Right cardiac atrium (tissue), 5 donors: ENCODE measurements at regions of chr20 and their contacts with region 1.

Region 1: GRCh38 chr20:38805502-38805957 is at the start of gene PPP1R16B:
- DNase-seq: peak; percentile 55 to 87 (median 86)
- ATAC-seq: peak; percentile 89 to 93
- H3K4me3 ChIP-seq: peak within 1 kb of the TSS; percentile 77
- H3K27ac ChIP-seq: peak within 1 kb of the TSS; percentile 76
- H3K4me1 ChIP-seq: peaks cover 3% of the 10 kb centered on the region
- H3K27me3 ChIP-seq: no peaks in the 10 kb centered on the region
- total RNA-seq, gene PPP1R16B: 5.1 to 9.1 (median 7.0) TPM

Region 2: DNA sequence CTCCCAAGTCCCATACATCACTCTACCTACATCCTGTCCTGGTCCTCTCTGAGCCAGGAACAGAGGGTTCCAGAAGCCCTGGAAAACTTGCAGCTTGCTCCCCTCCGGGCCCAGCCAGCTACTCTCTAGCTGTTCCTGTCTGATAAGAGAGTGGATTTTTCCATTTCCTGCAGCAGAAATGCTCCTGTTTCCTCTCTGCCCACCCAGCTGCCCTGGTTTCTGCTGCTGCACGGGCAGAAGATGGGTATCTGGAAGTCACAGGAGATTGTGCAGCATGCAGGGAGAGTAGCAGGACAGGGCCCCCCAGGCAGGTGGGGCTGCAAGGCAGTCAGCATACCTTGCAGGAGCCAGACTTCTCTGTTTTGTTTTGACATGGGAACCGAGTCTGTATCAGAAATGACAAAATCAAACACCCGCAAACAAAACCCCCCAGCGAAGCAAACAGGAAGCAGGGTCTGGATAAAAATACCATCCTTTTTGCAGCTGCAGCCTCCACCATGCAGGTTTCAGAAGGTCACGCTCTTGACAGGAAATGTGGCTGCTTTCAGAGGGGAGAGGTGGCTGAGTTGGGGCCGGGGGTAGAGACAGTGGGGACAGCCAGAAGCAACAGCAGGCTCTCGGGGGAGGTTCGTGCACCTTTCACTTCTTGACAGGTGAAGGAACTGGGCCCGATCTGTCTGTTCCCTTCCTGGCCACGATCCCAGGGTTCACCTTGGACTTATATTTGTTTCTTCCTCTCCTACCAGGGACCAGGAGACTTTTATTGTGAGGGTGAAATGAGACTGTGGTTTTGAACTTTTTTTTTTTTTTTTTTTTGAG is 69.9 kb after region 1 on chr20:
- intact Hi-C with region 1: loop called in 2 of 4 experiments (anchors 10 kb)
- DNase-seq: peak in 2 of 3 donors; percentile 49 to 65
- ATAC-seq: peak; percentile 76 to 94
- H3K4me3 ChIP-seq: no peak overlapping the region
- H3K27ac ChIP-seq: peak overlapping the region; percentile 69
- H3K4me1 ChIP-seq: peaks cover 8% of the 10 kb centered on the region
- H3K27me3 ChIP-seq: no peaks in the 10 kb centered on the region